ENCODE measurements at regions of chr2 and their contacts with region 1.

Region 1: DNA sequence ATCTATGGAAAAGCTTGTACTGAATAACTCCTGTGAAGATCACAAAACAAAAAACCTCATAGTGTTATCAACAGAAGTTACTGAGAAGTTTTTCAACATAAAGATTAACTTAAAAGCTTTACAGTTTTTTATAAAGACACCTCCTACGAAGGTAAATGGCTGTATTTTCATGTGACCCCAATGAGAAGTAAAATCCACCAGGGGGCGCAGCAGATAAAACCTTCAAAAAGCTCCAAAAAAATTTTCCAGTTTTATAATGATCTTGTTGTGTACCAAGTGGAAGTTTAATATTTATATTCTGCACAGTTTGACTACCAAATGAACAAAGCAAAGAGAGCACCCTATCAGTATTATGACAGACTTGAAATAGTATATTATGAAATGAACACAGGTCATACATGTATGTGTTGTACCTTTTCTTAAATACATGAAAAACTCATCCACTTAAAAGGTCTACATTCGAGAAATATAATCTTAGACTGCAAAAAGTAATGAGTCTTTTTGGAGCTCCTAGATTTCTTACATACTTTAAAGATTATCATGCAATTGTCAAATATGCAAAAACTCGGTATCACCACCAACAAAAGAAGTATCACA is 38.5 kb downstream of the PNO1 start:
- DNase-seq: peak in 25 of 35 experiments; percentile 6 to 75 (median 47)
- ATAC-seq: peak in 1 of 4 experiments; percentile 22
- H3K4me3 ChIP-seq: no peak overlapping the region
- H3K4me3 Mint-ChIP-seq: no peak overlapping the region
- H3K27ac ChIP-seq: peak overlapping the region; percentile 14
- H3K27ac Mint-ChIP-seq: peak overlapping the region in 1 of 2 donors; percentile 56
- H3K4me1 ChIP-seq: peaks cover 2 to 4% of the 10 kb centered on the region in 2 experiments
- H3K4me1 Mint-ChIP-seq: peaks cover 65 to 67% (median 66%) of the 10 kb centered on the region in 3 donors
- H3K27me3 ChIP-seq: no peaks in the 10 kb centered on the region
- H3K27me3 Mint-ChIP-seq: no peaks in the 10 kb centered on the region

Region 2: GRCh38 chr2:67825476-67825875 is 370.7 kb before region 1 on chr2:
- CTCF ChIA-PET with region 1: no interaction called
- POLR2A ChIA-PET with region 1: no interaction called
- DNase-seq: no peak
- ATAC-seq: no peak
- H3K4me3 ChIP-seq: no peak overlapping the region
- H3K4me3 Mint-ChIP-seq: no peak overlapping the region
- H3K27ac ChIP-seq: no peak overlapping the region
- H3K27ac Mint-ChIP-seq: no peak overlapping the region
- H3K4me1 ChIP-seq: no peaks in the 10 kb centered on the region
- H3K4me1 Mint-ChIP-seq: peaks cover 0 to 2% (median 0%) of the 10 kb centered on the region in 3 donors
- H3K27me3 ChIP-seq: no peaks in the 10 kb centered on the region
- H3K27me3 Mint-ChIP-seq: no peaks in the 10 kb centered on the region

Region 3: DNA sequence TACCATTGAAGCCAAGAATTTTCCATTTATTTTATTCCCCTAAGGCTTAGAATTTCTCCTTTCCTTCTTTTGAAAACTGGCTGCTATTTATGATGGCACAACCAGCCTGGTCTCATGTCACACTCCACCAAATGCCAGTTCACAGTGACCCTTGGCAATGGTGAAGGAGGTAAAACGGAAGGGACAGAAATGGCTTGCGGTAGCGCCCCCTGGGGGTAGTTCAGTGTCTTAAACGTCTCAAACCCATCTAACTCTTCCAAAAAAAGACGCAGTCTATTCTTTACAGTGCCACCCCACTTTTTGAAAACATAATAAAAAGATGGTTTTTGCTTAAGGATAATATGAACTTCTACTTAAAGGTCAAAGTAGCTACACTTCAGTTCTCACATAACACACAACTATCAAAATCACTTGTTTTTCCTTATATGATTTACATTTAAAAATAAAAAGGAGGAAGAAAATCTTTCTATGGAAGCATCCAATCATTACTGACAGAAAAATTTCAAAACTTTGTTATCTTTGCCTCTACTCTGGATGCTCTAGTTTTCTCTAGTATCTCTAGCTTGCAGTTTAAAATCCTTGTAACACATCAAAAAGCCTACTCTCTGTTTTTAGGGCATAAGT is 10.6 kb before region 1 on chr2:
- CTCF ChIA-PET with region 1: interaction called in 1 of 2 experiments, 29 read pairs
- POLR2A ChIA-PET with region 1: interaction called in 1 of 2 experiments, 3 read pairs
- DNase-seq: peak; percentile 4 to 81 (median 40)
- ATAC-seq: peak in 1 of 4 experiments; percentile 69
- H3K4me3 ChIP-seq: no peak overlapping the region
- H3K4me3 Mint-ChIP-seq: no peak overlapping the region
- H3K27ac ChIP-seq: no peak overlapping the region
- H3K27ac Mint-ChIP-seq: peak overlapping the region in 1 of 2 donors; percentile 44
- H3K4me1 ChIP-seq: peaks cover 2 to 5% of the 10 kb centered on the region in 2 experiments
- H3K4me1 Mint-ChIP-seq: peaks cover 37 to 48% (median 48%) of the 10 kb centered on the region in 3 donors
- H3K27me3 ChIP-seq: no peaks in the 10 kb centered on the region
- H3K27me3 Mint-ChIP-seq: no peaks in the 10 kb centered on the region

Region 4: GRCh38 chr2:68225119-68225632 is 29.0 kb after region 1 on chr2:
- CTCF ChIA-PET with region 1: interaction called, 3 to 23 read pairs
- POLR2A ChIA-PET with region 1: no interaction called
- DNase-seq: peak in 15 of 35 experiments; percentile 3 to 57 (median 8)
- ATAC-seq: peak; percentile 64 to 89 (median 72)
- H3K4me3 ChIP-seq: no peak overlapping the region
- H3K4me3 Mint-ChIP-seq: peak overlapping the region in 2 of 3 donors; percentile 19 to 22
- H3K27ac ChIP-seq: no peak overlapping the region
- H3K27ac Mint-ChIP-seq: peak overlapping the region; percentile 50 to 58
- H3K4me1 ChIP-seq: peaks cover 22 to 24% of the 10 kb centered on the region in 2 experiments
- H3K4me1 Mint-ChIP-seq: peaks cover 96 to 99% (median 98%) of the 10 kb centered on the region in 3 donors
- H3K27me3 ChIP-seq: no peaks in the 10 kb centered on the region
- H3K27me3 Mint-ChIP-seq: no peaks in the 10 kb centered on the region

Region 5: GRCh38 chr2:68251187-68251854 is 55.1 kb after region 1 on chr2:
- CTCF ChIA-PET with region 1: interaction called, 7 to 26 read pairs
- POLR2A ChIA-PET with region 1: interaction called in 1 of 2 experiments, 3 read pairs
- DNase-seq: peak; percentile 52 to 91 (median 78)
- ATAC-seq: peak; percentile 62 to 70 (median 66)
- H3K4me3 ChIP-seq: peak overlapping the region; percentile 86 to 99
- H3K4me3 Mint-ChIP-seq: peak overlapping the region in 2 of 3 donors; percentile 87 to 88
- H3K27ac ChIP-seq: peak overlapping the region; percentile 92
- H3K27ac Mint-ChIP-seq: peak overlapping the region; percentile 92 to 95
- H3K4me1 ChIP-seq: peaks cover 24 to 50% of the 10 kb centered on the region in 2 experiments
- H3K4me1 Mint-ChIP-seq: peaks cover 38 to 56% (median 45%) of the 10 kb centered on the region in 3 donors
- H3K27me3 ChIP-seq: no peaks in the 10 kb centered on the region
- H3K27me3 Mint-ChIP-seq: no peaks in the 10 kb centered on the region

Region 6: GRCh38 chr2:68290901-68291300 is 94.7 kb after region 1 on chr2:
- CTCF ChIA-PET with region 1: interaction called in 1 of 2 experiments, 16 read pairs
- POLR2A ChIA-PET with region 1: no interaction called
- DNase-seq: no peak
- ATAC-seq: no peak
- H3K4me3 ChIP-seq: no peak overlapping the region
- H3K4me3 Mint-ChIP-seq: no peak overlapping the region
- H3K27ac ChIP-seq: no peak overlapping the region
- H3K27ac Mint-ChIP-seq: no peak overlapping the region
- H3K4me1 ChIP-seq: no peaks in the 10 kb centered on the region
- H3K4me1 Mint-ChIP-seq: peaks cover 0 to 4% (median 0%) of the 10 kb centered on the region in 3 donors
- H3K27me3 ChIP-seq: peaks cover 0 to 8% of the 10 kb centered on the region in 2 experiments
- H3K27me3 Mint-ChIP-seq: peaks cover 15 to 26% of the 10 kb centered on the region in 2 donors

Region 7: GRCh38 chr2:68448671-68449653 is 252.7 kb after region 1 on chr2:
- CTCF ChIA-PET with region 1: no interaction called
- POLR2A ChIA-PET with region 1: no interaction called
- DNase-seq: peak in 9 of 35 experiments; percentile 12 to 36 (median 31)
- ATAC-seq: peak in 3 of 4 experiments; percentile 38 to 54 (median 46)
- H3K4me3 ChIP-seq: no peak overlapping the region
- H3K4me3 Mint-ChIP-seq: no peak overlapping the region
- H3K27ac ChIP-seq: no peak overlapping the region
- H3K27ac Mint-ChIP-seq: no peak overlapping the region
- H3K4me1 ChIP-seq: peaks cover 0 to 6% of the 10 kb centered on the region in 2 experiments
- H3K4me1 Mint-ChIP-seq: peaks cover 17 to 19% (median 19%) of the 10 kb centered on the region in 3 donors
- H3K27me3 ChIP-seq: no peaks in the 10 kb centered on the region
- H3K27me3 Mint-ChIP-seq: no peaks in the 10 kb centered on the region

Measured in T-cell (primary cell).